Left cardiac atrium (tissue), 4 donors: ENCODE measurements at regions of chr1 and their contacts with region 1.

Region 1: DNA sequence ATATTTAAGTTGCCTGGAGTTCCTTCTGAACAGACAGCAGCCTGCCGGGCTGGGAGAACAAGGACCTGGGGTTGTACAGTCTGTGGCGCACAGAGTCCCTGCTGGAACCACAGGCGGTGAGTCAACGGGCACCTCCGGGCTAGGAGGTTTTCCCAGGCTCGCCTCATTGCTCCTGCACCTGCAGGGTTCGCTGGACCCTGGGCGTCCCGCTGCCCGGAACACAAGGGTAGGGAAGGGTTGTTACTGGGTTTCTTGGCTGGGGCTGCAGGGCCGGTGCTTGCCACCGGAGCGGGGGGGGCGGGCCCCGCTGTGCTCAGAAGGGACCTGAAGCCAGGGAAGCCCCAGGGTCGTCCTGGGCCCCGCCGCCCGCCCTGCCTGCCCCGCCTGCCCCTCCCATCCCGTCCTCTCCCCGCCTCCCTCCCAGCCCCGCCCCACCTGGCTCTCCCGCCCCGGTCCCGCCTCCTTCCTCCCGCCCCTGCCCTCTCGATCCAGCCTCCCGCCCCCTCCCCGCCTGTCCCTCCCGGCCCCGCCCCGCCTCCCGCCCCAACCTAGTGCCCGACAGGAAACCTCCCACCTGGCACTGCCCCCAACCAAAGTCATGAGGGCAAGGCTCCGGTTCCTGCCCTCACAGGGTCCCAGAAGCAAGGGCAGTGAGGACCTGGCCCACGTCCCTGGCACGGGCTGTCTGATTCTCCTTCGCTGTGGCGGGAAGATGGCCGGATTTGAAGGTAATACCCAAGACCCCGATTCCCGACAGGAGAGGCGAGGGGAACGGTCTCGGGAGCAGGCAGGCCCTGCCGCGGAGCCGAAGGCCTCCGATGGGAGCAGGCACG is 6.8 kb downstream of the JMJD4 start:
- DNase-seq: peak; percentile 81
- ATAC-seq: peak; percentile 70 to 79

Region 2: DNA sequence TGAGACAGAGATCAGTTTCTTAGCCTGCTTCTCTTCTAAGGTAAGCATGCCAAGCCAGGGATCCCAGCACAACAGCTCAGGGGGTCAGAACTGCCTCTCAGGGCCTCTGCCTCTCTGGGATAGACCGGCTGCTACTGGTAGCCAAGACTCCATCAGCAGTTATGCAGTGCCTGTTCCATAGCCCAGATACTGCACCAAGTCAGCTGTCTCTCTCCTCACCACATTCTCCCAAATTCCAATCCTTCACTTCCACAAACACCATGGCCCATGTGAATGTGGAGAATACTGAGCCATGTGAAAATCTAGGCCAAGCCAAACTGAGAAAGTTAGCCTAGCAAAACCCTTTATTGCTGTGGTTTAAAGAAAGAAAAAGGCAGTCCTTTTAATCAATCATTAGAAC is 447.4 kb before region 1 on chr1:
- intact Hi-C with region 1: no loop called
- DNase-seq: no peak
- ATAC-seq: no peak

Region 3: GRCh38 chr1:227489572-227489971 is 238.7 kb before region 1 on chr1:
- intact Hi-C with region 1: loop called in 1 of 2 experiments (anchors 10 kb)
- DNase-seq: no peak
- ATAC-seq: peak; percentile 90 to 92

Region 4: DNA sequence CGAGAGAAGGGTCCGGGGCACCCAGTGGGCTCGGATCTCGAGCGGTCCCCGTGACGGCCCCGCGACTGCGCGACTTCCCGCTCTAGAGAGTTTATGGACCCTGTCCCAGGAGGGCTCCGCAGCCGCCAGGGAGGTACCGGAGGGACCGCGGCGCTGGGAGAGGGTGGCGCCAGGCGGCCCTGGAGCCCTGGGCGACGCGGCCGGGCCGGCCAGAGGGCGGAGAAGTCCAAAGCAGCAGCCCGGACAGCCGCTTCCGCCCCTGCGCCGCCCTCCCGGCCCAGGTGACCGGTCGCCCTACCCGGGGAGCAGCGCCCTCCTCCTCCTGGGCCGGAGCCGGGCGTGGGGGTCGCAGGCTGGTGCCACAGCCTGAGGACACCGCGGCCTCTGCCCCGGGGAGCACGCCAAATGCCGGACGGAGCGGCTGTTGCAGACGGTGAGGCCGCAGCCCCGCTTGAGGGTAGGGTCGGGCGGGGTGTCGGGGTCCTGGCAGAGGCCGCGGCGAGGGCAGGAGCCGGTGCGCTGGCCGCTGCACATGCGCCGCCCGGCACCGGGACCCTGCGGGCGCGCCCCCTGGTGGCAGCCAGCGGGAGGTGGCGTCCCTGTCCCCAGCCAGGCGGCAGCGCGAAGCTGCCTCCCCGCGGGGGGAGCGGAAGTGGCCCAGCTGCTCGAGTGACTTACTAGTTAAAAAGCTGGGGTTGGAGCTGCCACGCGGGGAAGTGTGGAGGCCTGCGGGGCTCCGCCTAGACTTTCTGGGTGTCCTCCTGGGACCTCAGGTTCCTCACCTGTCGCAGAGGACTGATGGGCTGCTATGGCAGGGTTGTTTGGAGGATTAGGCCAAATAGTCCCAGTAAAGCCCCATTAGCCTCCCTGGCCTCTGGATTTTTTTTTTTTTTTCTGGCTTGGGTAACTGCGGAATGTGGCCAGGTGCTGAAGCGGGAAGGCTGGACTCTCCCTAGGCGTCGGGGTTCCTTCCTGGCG is 185.8 kb before region 1 on chr1:
- intact Hi-C with region 1: loop called in 1 of 2 experiments (anchors 10 kb)
- DNase-seq: peak; percentile 91
- ATAC-seq: peak; percentile 96 to 97

Region 5: DNA sequence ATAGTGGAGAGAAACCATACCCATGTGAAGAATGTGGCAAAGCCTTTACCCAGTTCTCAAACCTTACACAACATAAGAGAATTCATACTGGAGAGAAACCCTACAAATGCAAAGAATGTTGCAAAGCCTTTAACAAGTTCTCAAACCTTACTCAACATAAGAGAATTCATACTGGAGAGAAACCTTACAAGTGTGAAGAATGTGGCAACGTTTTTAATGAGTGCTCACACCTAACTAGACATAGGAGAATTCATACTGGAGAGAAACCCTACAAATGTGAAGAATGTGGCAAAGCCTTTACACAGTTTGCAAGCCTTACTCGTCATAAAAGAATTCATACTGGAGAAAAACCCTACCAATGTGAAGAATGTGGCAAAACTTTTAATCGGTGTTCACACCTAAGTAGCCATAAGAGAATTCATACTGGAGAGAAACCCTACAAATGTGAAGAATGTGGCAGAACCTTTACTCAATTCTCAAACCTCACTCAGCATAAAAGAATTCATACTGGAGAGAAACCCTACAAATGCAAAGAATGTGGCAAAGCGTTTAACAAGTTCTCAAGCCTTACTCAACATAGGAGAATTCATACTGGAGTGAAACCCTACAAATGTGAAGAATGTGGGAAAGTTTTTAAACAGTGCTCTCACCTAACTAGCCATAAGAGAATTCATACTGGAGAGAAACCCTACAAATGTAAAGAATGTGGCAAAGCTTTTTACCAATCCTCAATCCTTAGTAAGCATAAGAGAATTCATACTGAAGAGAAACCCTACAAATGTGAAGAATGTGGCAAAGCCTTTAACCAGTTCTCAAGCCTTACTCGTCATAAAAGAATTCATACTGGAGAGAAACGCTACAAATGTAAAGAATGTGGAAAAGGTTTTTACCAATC is 73.2 kb before region 1 on chr1:
- intact Hi-C with region 1: no loop called
- DNase-seq: no peak
- ATAC-seq: no peak

Region 6: DNA sequence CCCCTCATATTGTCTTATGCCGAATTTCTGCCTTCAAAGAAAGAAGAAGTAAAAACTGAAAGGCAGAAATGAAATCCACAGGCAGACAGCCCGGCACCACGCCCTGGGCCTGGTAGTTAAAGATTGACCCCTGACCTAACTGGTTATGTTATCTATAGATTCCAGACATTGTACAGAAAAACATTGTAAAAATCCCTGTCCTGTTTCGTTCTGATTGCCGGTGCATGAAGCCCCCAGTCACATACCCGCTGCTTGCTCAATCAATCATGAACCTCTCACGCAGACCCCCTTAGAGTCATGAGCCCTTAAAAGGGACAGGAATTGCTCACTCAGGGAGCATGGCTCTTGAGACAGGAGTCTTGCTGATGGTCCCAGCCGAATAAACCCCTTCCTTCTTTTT is 42.5 kb before region 1 on chr1:
- intact Hi-C with region 1: no loop called
- DNase-seq: no peak
- ATAC-seq: no peak